ENCODE measurements at regions of chr6 and their contacts with region 1.

Region 1: GRCh38 chr6:35797837-35798526 is 859 bp upstream of the CLPS start:
- DNase-seq: no peak
- ATAC-seq: no peak
- H3K4me3 Mint-ChIP-seq: no peak overlapping the region
- H3K27ac Mint-ChIP-seq: no peak overlapping the region
- H3K4me1 Mint-ChIP-seq: no peaks in the 10 kb centered on the region
- H3K27me3 Mint-ChIP-seq: peaks cover 3% of the 10 kb centered on the region

Region 2: GRCh38 chr6:35786810-35787209 is 11.2 kb before region 1 on chr6:
- CTCF ChIA-PET with region 1: no interaction called
- POLR2A ChIA-PET with region 1: interaction called, 5 read pairs
- intact Hi-C with region 1: loop called (anchors 1 kb)
- DNase-seq: no peak
- ATAC-seq: no peak
- H3K4me3 Mint-ChIP-seq: no peak overlapping the region
- H3K27ac Mint-ChIP-seq: no peak overlapping the region
- H3K4me1 Mint-ChIP-seq: no peaks in the 10 kb centered on the region
- H3K27me3 Mint-ChIP-seq: peaks cover 34% of the 10 kb centered on the region

Region 3: GRCh38 chr6:35943056-35943789 is 145.2 kb after region 1 on chr6:
- CTCF ChIA-PET with region 1: no interaction called
- POLR2A ChIA-PET with region 1: no interaction called
- intact Hi-C with region 1: no loop called
- DNase-seq: no peak
- ATAC-seq: no peak
- H3K4me3 Mint-ChIP-seq: no peak overlapping the region
- H3K27ac Mint-ChIP-seq: no peak overlapping the region
- H3K4me1 Mint-ChIP-seq: no peaks in the 10 kb centered on the region
- H3K27me3 Mint-ChIP-seq: no peaks in the 10 kb centered on the region

Measured in activated CD4-positive, alpha-beta T cell treated with anti-CD3 and anti-CD28 coated beads for 36 hours (primary cell).